Head of caudate nucleus (tissue), 42 donors: ENCODE measurements at regions of chr11 and their contacts with region 1.

Region 1: GRCh38 chr11:60900507-60901404 is 5.6 kb downstream of the PRPF19 start:
- DNase-seq: peak in 2 of 42 donors; percentile 23 to 34

Region 2: GRCh38 chr11:60797846-60798630 is 102.7 kb before region 1 on chr11:
- intact Hi-C with region 1: no loop called
- DNase-seq: no peak

Region 3: DNA sequence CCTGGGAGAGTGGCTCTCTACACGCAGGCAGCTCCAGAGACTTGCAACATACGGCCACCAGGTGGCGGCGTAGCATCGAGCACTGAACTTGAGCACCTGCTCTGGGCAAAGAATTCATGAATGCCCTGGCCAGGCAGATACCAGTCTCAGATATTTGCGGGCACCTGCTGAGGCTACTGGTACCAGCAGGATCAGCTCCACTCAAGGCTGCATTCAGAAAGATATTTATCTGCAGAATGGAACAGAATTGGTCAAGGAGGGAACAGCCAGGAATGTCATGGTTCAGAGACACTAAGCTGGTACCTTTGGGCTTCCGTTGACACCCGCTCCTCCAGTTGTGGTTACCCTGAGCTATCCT is 69.6 kb before region 1 on chr11:
- intact Hi-C with region 1: loop called (anchors 5 kb)
- DNase-seq: peak; percentile 67 to 95 (median 88)

Region 4: DNA sequence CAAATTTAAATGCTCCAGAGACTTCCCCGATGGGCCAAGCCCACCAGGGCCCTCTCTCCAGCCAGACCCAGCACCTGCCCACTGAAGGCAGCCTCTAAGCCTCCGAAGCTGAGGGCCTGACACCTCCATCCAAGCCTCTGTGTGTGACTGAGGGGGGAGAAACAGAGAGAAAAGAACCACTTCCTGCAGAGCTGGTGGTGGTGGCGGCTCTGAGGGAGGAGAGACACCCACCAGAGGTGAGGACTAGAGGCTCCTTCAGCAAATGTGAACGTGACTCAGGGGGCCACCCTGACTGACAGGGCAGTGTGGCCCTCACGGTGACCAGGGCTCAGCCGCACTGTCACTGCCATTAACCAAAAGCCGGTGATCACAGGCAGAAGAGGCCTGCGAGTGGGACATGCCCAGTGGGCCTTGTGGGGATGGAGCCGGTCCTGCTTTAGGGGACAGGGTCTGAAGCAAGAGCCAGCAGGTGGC is 170.5 kb after region 1 on chr11:
- intact Hi-C with region 1: no loop called
- DNase-seq: no peak

Region 5: GRCh38 chr11:61083601-61084147 is 182.9 kb after region 1 on chr11:
- intact Hi-C with region 1: no loop called
- DNase-seq: no peak